Panc1 (cell line): ENCODE measurements at regions of chr20 and their contacts with region 1.

Region 1: DNA sequence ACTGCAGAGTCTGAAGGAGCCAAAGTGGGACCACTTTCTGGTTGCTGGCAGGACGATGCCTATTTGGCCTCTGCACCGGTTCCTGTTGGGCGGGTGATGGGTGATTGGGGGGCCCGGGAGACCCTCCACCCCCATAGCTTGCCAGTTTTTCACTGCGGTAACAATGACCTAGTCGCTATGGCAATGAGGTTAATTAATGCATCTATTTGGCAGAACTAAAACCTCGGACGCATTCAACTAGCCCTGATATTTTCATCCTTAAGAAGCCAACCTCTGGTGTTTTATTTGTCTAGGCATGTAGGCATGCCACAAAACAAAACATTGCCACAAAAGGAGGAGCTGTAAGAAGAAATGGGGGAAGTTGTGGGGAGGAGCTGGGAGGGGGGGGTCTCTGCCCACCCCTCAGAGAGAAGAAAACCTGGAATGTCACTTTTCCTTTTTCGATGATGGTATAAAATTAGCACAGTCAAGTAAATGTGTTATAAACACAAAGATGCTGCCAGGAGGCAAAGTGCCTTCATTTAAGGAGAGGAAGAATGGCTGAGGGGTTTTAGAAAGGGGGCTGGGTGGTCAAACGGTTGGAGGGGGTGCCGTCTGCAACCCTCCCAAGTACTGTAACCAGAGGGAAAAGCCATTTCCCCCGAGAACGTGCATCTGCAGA is 25.2 kb downstream of the PMEPA1 start:
- DNase-seq: no peak
- ATAC-seq: no peak
- H3K4me3 ChIP-seq: no peak overlapping the region
- H3K27ac ChIP-seq: no peak overlapping the region
- H3K4me1 ChIP-seq: peaks cover 50% of the 10 kb centered on the region
- H3K27me3 ChIP-seq: no peaks in the 10 kb centered on the region
- CTCF ChIP-seq: no peak

Region 2: DNA sequence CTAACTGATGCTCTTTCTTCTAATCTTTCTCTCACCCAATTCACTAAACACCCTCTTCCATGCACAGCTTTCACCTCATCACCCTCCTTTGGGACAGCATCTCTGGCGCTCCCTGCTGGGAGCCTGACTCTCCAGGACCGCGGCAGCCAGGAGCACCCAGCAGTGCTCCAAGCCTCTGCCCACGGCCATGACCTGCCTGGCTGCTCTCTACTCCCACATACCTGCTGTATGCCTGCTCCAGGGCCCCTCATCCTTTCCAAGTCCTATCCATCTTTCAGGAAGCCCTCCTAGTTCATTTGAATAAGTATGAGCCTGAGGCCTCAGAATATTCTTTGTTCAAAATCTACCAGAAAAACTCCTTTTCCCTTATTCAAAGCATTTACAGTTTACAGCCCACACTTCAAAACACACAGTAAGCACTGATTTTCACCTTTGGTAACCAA is 174.9 kb before region 1 on chr20:
- CTCF ChIA-PET with region 1: no interaction called
- POLR2A ChIA-PET with region 1: no interaction called
- in situ Hi-C with region 1: no loop called
- intact Hi-C with region 1: no loop called
- DNase-seq: no peak
- ATAC-seq: peak; percentile 90
- H3K4me3 ChIP-seq: no peak overlapping the region
- H3K27ac ChIP-seq: no peak overlapping the region
- H3K4me1 ChIP-seq: no peaks in the 10 kb centered on the region
- H3K27me3 ChIP-seq: no peaks in the 10 kb centered on the region
- CTCF ChIP-seq: peak; percentile 84

Region 3: DNA sequence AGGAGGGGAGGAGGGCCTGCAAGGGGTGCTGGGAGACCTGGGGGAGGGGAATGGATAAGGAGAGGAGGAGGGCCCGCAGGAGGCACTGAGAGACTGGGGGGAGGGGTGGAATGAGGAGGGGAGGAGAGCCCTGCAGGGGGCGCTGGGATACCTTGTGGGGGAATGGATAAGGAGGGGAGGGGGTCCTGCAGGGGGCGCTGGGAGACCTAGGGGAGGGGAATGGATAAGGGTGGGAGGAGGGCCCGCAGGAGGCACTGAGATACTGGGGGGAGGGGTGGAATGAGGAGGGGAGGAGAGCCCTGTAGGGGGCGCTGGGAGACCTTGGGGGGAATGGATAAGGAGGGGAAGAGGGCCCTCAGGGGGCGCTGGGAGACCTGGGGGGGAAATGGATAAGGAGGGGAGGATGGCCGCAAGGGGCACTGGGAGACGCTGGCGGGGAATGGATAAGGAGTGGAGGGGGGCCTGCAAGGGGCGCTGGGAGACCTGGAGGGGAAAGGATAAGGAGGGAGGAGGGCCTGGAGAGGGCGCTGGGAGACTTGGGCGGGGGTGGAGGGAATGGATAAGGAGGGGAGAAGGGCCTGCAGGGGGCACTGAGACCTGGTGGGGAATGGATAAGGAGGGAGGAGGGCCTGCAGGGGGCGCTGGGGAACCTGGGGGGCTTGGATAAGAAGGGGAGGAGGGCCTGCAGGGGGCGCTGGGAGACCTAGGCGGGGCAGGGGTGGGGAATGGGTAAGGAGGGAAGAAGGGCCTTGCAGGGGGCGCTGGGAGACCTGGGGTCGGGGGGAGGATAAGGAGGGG is 158.3 kb before region 1 on chr20:
- CTCF ChIA-PET with region 1: no interaction called
- POLR2A ChIA-PET with region 1: no interaction called
- in situ Hi-C with region 1: no loop called
- intact Hi-C with region 1: no loop called
- DNase-seq: no peak
- ATAC-seq: no peak
- H3K4me3 ChIP-seq: no peak overlapping the region
- H3K27ac ChIP-seq: no peak overlapping the region
- H3K4me1 ChIP-seq: no peaks in the 10 kb centered on the region
- H3K27me3 ChIP-seq: no peaks in the 10 kb centered on the region
- CTCF ChIP-seq: peak; percentile 62

Region 4: GRCh38 chr20:57571782-57572416 is 112.7 kb before region 1 on chr20:
- CTCF ChIA-PET with region 1: no interaction called
- POLR2A ChIA-PET with region 1: interaction called, 10 read pairs
- in situ Hi-C with region 1: no loop called
- intact Hi-C with region 1: no loop called
- DNase-seq: no peak
- ATAC-seq: no peak
- H3K4me3 ChIP-seq: no peak overlapping the region
- H3K27ac ChIP-seq: no peak overlapping the region
- H3K4me1 ChIP-seq: no peaks in the 10 kb centered on the region
- H3K27me3 ChIP-seq: peaks cover 14% of the 10 kb centered on the region; the same call in 1 of the 2 replicates
- CTCF ChIP-seq: no peak

Region 5: GRCh38 chr20:57582432-57583305 is 101.9 kb before region 1 on chr20:
- CTCF ChIA-PET with region 1: no interaction called
- POLR2A ChIA-PET with region 1: no interaction called
- in situ Hi-C with region 1: no loop called
- intact Hi-C with region 1: no loop called
- DNase-seq: no peak
- ATAC-seq: peak; percentile 53
- H3K4me3 ChIP-seq: no peak overlapping the region
- H3K27ac ChIP-seq: no peak overlapping the region
- H3K4me1 ChIP-seq: peaks cover 5% of the 10 kb centered on the region
- H3K27me3 ChIP-seq: peaks cover 8% of the 10 kb centered on the region; the same call in 1 of the 2 replicates
- CTCF ChIP-seq: peak; percentile 85

Region 6: DNA sequence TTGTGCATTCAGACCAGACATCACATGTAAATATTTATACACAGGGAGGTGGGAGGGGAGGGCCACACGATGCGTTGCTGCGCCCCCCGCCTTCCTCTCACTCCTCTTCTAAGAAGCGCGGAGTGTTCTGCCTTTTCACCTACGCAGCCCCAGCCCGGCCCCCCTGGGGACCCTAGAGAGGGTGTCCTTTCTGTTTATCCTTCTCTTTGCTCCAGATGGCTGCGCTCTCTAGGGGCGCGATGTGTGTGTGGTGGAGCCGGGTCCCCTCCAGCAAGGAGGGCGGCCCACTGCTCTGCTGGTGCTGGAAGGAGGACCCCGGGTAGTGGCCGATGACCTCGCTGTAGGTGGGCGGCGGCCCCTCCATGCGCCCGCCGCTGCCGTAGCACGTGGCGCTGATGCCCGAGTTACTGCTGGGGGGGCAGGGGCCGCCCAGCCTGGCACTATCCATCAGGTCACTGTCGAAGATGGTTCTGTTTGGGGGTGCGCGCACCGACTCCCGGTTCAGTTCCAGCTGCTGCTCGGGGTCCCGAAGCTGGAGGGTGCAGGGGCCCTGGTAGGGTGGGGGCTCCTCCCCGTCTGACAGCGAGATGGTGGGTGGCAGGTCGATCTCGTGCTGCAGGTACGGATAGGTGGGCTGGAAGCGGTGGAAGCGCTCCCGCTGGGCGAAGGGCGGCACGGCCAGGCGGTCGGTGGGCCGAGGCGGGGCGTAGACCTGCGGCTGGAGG is 32.6 kb before region 1 on chr20:
- CTCF ChIA-PET with region 1: no interaction called
- POLR2A ChIA-PET with region 1: no interaction called
- in situ Hi-C with region 1: no loop called
- intact Hi-C with region 1: no loop called
- DNase-seq: no peak
- ATAC-seq: no peak
- H3K4me3 ChIP-seq: no peak overlapping the region
- H3K27ac ChIP-seq: no peak overlapping the region
- H3K4me1 ChIP-seq: peaks cover 7% of the 10 kb centered on the region
- H3K27me3 ChIP-seq: no peaks in the 10 kb centered on the region
- CTCF ChIP-seq: no peak